ENCODE measurements at regions of chr12 and their contacts with region 1.

Region 1: GRCh38 chr12:103930034-103930786 is at the start of gene HSP90B1:
- DNase-seq: peak; percentile 98 to 100 (median 99)
- ATAC-seq: peak; percentile 77 to 82 (median 80)
- H3K4me3 ChIP-seq: peak within 1 kb of the TSS; percentile 71 to 90
- H3K4me3 Mint-ChIP-seq: peak within 1 kb of the TSS; percentile 81 to 97 (median 87)
- H3K27ac ChIP-seq: peak within 1 kb of the TSS; percentile 97
- H3K27ac Mint-ChIP-seq: peak within 1 kb of the TSS; percentile 100
- H3K4me1 ChIP-seq: peaks cover 23 to 45% of the 10 kb centered on the region in 2 experiments
- H3K4me1 Mint-ChIP-seq: peaks cover 61 to 64% (median 63%) of the 10 kb centered on the region in 3 donors
- H3K27me3 ChIP-seq: no peaks in the 10 kb centered on the region
- H3K27me3 Mint-ChIP-seq: no peaks in the 10 kb centered on the region
- total RNA-seq, gene HSP90B1: 240 to 310 (median 290) TPM

Region 2: GRCh38 chr12:103401421-103401820 is 528.8 kb before region 1 on chr12:
- CTCF ChIA-PET with region 1: no interaction called
- POLR2A ChIA-PET with region 1: no interaction called
- DNase-seq: peak in 3 of 35 experiments; percentile 4 to 29 (median 5)
- ATAC-seq: peak in 1 of 4 experiments; percentile 49
- H3K4me3 ChIP-seq: no peak overlapping the region
- H3K4me3 Mint-ChIP-seq: no peak overlapping the region
- H3K27ac ChIP-seq: no peak overlapping the region
- H3K27ac Mint-ChIP-seq: no peak overlapping the region
- H3K4me1 ChIP-seq: no peaks in the 10 kb centered on the region
- H3K4me1 Mint-ChIP-seq: peaks cover 0 to 2% (median 0%) of the 10 kb centered on the region in 3 donors
- H3K27me3 ChIP-seq: no peaks in the 10 kb centered on the region
- H3K27me3 Mint-ChIP-seq: no peaks in the 10 kb centered on the region

Region 3: GRCh38 chr12:103680591-103681141 is 249.5 kb before region 1 on chr12:
- CTCF ChIA-PET with region 1: no interaction called
- POLR2A ChIA-PET with region 1: no interaction called
- DNase-seq: no peak
- ATAC-seq: no peak
- H3K4me3 ChIP-seq: no peak overlapping the region
- H3K4me3 Mint-ChIP-seq: no peak overlapping the region
- H3K27ac ChIP-seq: no peak overlapping the region
- H3K27ac Mint-ChIP-seq: no peak overlapping the region
- H3K4me1 ChIP-seq: no peaks in the 10 kb centered on the region
- H3K4me1 Mint-ChIP-seq: no peaks in the 10 kb centered on the region
- H3K27me3 ChIP-seq: peaks cover 0 to 2% of the 10 kb centered on the region in 2 experiments
- H3K27me3 Mint-ChIP-seq: peaks cover 6 to 7% of the 10 kb centered on the region in 2 donors

Region 4: GRCh38 chr12:103725398-103725797 is 204.8 kb before region 1 on chr12:
- CTCF ChIA-PET with region 1: no interaction called
- POLR2A ChIA-PET with region 1: no interaction called
- DNase-seq: no peak
- ATAC-seq: no peak
- H3K4me3 ChIP-seq: no peak overlapping the region
- H3K4me3 Mint-ChIP-seq: no peak overlapping the region
- H3K27ac ChIP-seq: no peak overlapping the region
- H3K27ac Mint-ChIP-seq: no peak overlapping the region
- H3K4me1 ChIP-seq: no peaks in the 10 kb centered on the region
- H3K4me1 Mint-ChIP-seq: no peaks in the 10 kb centered on the region
- H3K27me3 ChIP-seq: peaks cover 0 to 5% of the 10 kb centered on the region in 2 experiments
- H3K27me3 Mint-ChIP-seq: peaks cover 0 to 3% of the 10 kb centered on the region in 2 donors

Region 5: DNA sequence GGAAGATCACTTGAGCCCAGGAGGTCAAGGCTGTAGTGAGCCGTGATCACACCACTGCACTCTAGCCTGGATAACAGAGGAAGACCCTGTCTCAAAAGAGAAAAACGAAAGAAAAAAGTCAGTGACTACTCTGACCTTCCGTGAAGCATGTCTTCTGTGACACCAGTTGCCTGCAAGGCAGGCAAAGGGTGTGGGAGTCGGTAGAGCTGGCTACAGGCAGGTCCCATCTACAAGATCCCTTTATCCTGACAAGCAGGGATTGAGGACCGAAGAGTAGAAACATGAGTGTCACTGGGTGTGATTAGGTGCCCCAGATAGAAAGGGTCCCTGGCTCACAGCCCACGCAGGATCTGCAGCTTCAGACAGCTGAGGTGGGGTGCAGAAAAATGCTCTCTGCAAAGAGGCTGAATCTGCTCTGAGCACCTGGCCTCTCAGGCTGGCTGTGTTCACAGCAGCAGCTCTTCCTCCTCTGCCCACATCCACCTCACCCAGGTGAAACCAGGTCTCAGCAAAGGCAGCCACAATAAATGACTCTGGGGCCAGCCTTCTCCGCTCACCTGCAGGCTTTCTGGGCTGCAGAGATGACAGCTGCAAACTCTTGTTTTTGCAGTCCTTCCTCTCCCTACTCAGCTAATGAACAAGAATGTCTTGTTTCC is 28.6 kb before region 1 on chr12:
- CTCF ChIA-PET with region 1: interaction called, 3 to 9 read pairs
- POLR2A ChIA-PET with region 1: interaction called, 7 to 11 read pairs
- DNase-seq: peak; percentile 34 to 86 (median 63)
- ATAC-seq: peak; percentile 91 to 99 (median 97)
- H3K4me3 ChIP-seq: peak overlapping the region; percentile 4 to 35
- H3K4me3 Mint-ChIP-seq: peak overlapping the region; percentile 44 to 74 (median 51)
- H3K27ac ChIP-seq: peak overlapping the region; percentile 71
- H3K27ac Mint-ChIP-seq: peak overlapping the region; percentile 87 to 94
- H3K4me1 ChIP-seq: peaks cover 18 to 47% of the 10 kb centered on the region in 2 experiments
- H3K4me1 Mint-ChIP-seq: peaks cover 59 to 67% (median 63%) of the 10 kb centered on the region in 3 donors
- H3K27me3 ChIP-seq: no peaks in the 10 kb centered on the region
- H3K27me3 Mint-ChIP-seq: no peaks in the 10 kb centered on the region

Region 6: DNA sequence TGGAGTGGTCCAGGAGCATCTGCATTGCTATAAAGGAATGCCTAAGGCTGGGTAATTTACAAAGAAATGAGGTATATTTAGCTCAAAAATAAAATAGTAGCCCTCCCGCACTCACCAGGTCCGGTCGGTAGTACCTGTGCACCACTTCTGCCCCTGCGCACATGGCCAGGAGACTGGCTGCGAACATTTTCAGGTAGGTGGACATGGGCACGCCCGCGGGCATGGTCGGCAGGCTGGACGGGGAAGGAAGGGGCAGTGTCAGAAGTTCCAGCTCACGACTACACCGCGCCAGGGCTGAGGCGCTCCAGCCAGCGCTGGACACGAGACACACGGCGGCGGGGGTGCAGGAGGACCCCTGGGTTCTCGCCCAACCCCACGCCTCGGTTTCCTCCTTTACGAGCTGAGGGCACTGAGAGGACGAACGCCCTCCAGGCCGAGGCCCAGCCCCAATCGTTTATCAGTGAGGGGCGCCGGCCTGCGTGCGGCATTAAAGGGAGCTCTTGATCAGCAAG is 26.4 kb after region 1 on chr12:
- CTCF ChIA-PET with region 1: interaction called in 1 of 2 experiments, 11 read pairs
- POLR2A ChIA-PET with region 1: interaction called, 11 read pairs
- DNase-seq: peak in 3 of 35 experiments; percentile 2 to 11 (median 5)
- ATAC-seq: peak in 3 of 4 experiments; percentile 6 to 8 (median 7)
- H3K4me3 ChIP-seq: peak overlapping the region; percentile 72 to 87
- H3K4me3 Mint-ChIP-seq: peak overlapping the region; percentile 97 to 98 (median 98)
- H3K27ac ChIP-seq: peak overlapping the region; percentile 72
- H3K27ac Mint-ChIP-seq: peak overlapping the region; percentile 98 to 99
- H3K4me1 ChIP-seq: peaks cover 4 to 21% of the 10 kb centered on the region in 2 experiments
- H3K4me1 Mint-ChIP-seq: peaks cover 37 to 47% (median 44%) of the 10 kb centered on the region in 3 donors
- H3K27me3 ChIP-seq: no peaks in the 10 kb centered on the region
- H3K27me3 Mint-ChIP-seq: no peaks in the 10 kb centered on the region

Region 7: DNA sequence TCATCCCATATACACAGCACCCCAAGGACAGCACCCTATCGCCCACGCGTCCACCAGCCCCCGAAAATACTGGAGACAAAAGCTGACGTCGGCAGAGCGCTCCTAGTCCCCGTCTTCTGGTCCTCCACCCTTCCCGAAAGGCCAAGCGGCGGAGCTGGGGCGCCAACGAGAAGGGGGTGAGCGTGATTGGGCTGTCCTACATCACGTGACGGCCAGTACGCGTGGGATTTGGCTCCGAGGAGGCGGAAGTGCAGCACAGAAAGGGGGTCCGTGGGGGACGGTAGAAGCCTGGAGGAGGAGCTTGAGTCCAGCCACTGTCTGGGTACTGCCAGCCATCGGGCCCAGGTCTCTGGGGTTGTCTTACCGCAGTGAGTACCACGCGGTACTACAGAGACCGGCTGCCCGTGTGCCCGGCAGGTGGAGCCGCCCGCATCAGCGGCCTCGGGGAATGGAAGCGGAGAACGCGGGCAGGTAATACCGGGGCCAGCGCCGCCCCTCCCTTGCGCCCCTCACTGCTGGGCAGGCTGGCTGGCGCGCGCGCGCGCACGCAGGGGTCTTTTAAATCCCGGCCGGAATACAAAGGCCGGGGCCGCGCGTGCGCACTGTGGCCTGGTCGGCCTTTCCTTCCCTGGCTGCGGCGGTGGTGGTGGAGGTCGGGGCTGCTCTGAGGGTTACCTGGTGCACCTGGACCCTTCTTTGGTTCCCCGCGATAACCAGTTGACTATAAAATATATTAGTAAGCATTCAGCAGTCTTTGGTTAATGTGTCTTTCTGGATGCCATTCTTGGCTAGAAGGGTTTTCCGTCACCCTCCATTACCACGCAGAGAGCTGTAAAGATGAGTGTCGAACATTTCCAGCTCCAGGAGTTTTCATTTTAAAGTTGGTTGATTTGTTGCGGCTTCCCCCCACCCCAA is 35.6 kb after region 1 on chr12 and contains the start of gene TDG:
- CTCF ChIA-PET with region 1: interaction called in 1 of 2 experiments, 23 read pairs
- POLR2A ChIA-PET with region 1: interaction called, 7 to 54 read pairs
- DNase-seq: peak; percentile 84 to 99 (median 97)
- ATAC-seq: peak; percentile 94 to 96 (median 94)
- H3K4me3 ChIP-seq: peak within 1 kb of the TSS; percentile 68 to 86
- H3K4me3 Mint-ChIP-seq: peak within 1 kb of the TSS; percentile 86 to 97 (median 97)
- H3K27ac ChIP-seq: peak within 1 kb of the TSS; percentile 92
- H3K27ac Mint-ChIP-seq: peak within 1 kb of the TSS; percentile 99
- H3K4me1 ChIP-seq: peaks cover 16 to 38% of the 10 kb centered on the region in 2 experiments
- H3K4me1 Mint-ChIP-seq: peaks cover 58 to 69% (median 68%) of the 10 kb centered on the region in 3 donors
- H3K27me3 ChIP-seq: no peaks in the 10 kb centered on the region
- H3K27me3 Mint-ChIP-seq: no peaks in the 10 kb centered on the region
- total RNA-seq, gene TDG: 25.0 to 32.4 (median 30.0) TPM

Region 8: GRCh38 chr12:104137913-104138796 is 207.9 kb after region 1 on chr12 and contains the start of gene NFYB:
- CTCF ChIA-PET with region 1: interaction called in 1 of 2 experiments, 10 read pairs
- POLR2A ChIA-PET with region 1: interaction called in 1 of 2 experiments, 8 read pairs
- DNase-seq: peak; percentile 84 to 97 (median 91)
- ATAC-seq: peak; percentile 95 to 97 (median 96)
- H3K4me3 ChIP-seq: peak within 1 kb of the TSS; percentile 64 to 87
- H3K4me3 Mint-ChIP-seq: peak within 1 kb of the TSS; percentile 72 to 88 (median 87)
- H3K27ac ChIP-seq: peak within 1 kb of the TSS; percentile 36
- H3K27ac Mint-ChIP-seq: peak within 1 kb of the TSS; percentile 80 to 89
- H3K4me1 ChIP-seq: peaks cover 14 to 20% of the 10 kb centered on the region in 2 experiments
- H3K4me1 Mint-ChIP-seq: peaks cover 7 to 22% (median 10%) of the 10 kb centered on the region in 3 donors
- H3K27me3 ChIP-seq: no peaks in the 10 kb centered on the region
- H3K27me3 Mint-ChIP-seq: no peaks in the 10 kb centered on the region
- total RNA-seq, gene NFYB: 15.6 to 23.7 (median 22.3) TPM

Measured in T-cell (primary cell).